H1 (cell line): ENCODE measurements at regions of chr10 and their contacts with region 1.

Region 1: GRCh38 chr10:71696628-71697326 is 22.8 kb downstream of the C10orf105 start:
- DNase-seq: peak; percentile 41 to 95
- H3K4me3 ChIP-seq: no peak overlapping the region
- H3K27ac ChIP-seq: no peak overlapping the region
- H3K4me1 ChIP-seq: no peaks in the 10 kb centered on the region; a peak in 1 of 7 replicates
- H3K27me3 ChIP-seq: no peaks in the 10 kb centered on the region
- CTCF ChIP-seq: peak; percentile 94 to 95 (median 95)
- EP300 ChIP-seq: no peak
- POLR2A ChIP-seq: no peak
- RAD21 ChIP-seq: peak; percentile 81 to 87

Region 2: DNA sequence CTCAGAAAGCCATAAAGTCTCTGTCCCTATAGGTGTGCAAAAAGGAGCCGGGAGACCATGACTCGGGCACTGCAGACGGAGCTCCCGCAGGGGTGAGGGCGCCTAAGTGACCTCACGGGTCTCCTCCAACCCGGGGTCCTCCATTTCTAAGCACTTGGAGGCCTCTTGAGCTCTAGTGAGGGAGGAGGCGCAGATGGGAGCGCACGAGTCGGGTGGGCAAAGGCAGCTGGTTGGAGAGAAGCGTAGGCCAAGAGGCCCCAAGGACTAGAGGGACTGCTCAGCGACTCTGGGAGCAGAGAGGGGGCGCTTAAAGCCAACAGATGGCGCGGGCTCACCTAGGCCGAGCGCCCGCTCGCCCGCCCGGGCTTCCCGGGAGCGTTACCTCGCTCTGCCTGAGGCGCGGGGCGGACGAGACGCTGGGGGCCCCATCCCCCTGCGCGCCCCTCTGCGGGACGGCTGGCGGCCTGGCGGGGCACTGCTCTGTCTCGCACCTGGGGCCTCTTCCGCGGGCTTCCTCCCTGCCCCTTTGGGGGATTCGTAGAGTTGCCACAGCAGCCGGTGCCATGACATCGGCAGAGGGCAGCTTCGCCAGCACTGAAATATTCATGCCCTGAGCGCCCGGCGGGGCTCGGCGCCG is 300.6 kb before region 1 on chr10:
- CTCF ChIA-PET with region 1: interaction called, 12 read pairs
- POLR2A ChIA-PET with region 1: no interaction called
- DNase-seq: peak; percentile 60 to 79
- H3K4me3 ChIP-seq: peak overlapping the region; percentile 54 to 86 (median 62)
- H3K27ac ChIP-seq: no peak overlapping the region
- H3K4me1 ChIP-seq: peaks cover 0 to 18% (median 10%) of the 10 kb centered on the region in 4 experiments; a peak in 6 of 7 replicates
- H3K27me3 ChIP-seq: peaks cover 15 to 50% (median 40%) of the 10 kb centered on the region in 4 experiments
- CTCF ChIP-seq: peak; percentile 55 to 84 (median 71)
- EP300 ChIP-seq: no peak
- POLR2A ChIP-seq: no peak
- RAD21 ChIP-seq: peak; percentile 84 to 88

Region 3: GRCh38 chr10:71638064-71638821 is 58.5 kb before region 1 on chr10:
- CTCF ChIA-PET with region 1: interaction called, 47 read pairs
- POLR2A ChIA-PET with region 1: no interaction called
- DNase-seq: no peak
- H3K4me3 ChIP-seq: no peak overlapping the region
- H3K27ac ChIP-seq: no peak overlapping the region
- H3K4me1 ChIP-seq: peaks cover 5 to 44% (median 34%) of the 10 kb centered on the region in 4 experiments
- H3K27me3 ChIP-seq: peaks cover 0 to 20% (median 12%) of the 10 kb centered on the region in 4 experiments; a peak in 5 of 7 replicates
- CTCF ChIP-seq: no peak
- EP300 ChIP-seq: no peak
- POLR2A ChIP-seq: no peak
- RAD21 ChIP-seq: no peak

Region 4: DNA sequence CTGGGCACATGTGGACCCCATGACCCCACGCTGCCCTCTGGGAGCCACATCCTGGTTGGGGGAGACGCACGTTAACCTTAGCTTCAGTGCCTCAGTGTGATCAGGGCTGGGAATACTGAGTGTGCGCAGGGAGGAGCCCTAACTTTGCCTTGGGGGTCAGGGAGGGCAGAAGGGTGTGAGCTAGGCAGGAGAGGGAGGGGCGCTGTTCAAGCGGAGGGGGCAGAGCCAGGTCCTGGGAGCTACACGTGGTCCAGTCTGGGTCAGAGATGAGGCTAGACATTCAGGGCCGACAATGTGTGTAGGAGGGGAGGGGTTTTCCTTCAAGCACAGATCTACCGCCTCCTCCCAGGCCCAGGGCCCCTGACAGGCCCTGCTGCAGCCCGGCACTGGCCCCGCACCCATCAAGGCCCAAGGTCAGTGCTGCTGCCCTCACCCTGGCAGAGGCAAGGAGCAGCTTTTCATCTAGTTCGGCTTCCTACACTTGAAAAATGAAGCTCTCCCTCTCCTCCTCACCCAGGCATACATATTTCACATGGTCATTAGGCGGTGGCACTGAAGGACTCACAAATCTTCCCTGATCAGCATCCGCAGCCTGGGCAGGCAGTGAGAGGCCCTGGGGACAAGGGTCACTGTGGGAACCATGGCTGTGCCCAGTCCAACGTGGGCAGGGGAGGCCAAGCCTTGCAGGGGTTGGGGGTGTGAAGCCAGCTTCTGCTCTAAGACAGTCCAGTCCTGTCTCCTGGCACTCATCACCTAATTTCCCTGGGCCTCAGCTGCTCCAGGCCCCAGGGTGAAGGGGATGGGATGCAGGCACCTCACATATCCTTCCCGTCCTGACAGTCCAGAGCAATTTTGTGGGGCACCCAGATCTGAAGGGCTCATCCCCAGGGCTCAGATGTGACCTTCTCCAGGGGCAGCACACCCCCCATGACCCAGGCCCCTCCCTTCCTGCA is 24.5 kb before region 1 on chr10:
- CTCF ChIA-PET with region 1: interaction called, 52 read pairs
- POLR2A ChIA-PET with region 1: interaction called, 3 read pairs
- DNase-seq: no peak
- H3K4me3 ChIP-seq: no peak overlapping the region
- H3K27ac ChIP-seq: no peak overlapping the region
- H3K4me1 ChIP-seq: no peaks in the 10 kb centered on the region; a peak in 1 of 7 replicates
- H3K27me3 ChIP-seq: no peaks in the 10 kb centered on the region
- CTCF ChIP-seq: no peak
- EP300 ChIP-seq: no peak
- POLR2A ChIP-seq: no peak
- RAD21 ChIP-seq: no peak

Region 5: DNA sequence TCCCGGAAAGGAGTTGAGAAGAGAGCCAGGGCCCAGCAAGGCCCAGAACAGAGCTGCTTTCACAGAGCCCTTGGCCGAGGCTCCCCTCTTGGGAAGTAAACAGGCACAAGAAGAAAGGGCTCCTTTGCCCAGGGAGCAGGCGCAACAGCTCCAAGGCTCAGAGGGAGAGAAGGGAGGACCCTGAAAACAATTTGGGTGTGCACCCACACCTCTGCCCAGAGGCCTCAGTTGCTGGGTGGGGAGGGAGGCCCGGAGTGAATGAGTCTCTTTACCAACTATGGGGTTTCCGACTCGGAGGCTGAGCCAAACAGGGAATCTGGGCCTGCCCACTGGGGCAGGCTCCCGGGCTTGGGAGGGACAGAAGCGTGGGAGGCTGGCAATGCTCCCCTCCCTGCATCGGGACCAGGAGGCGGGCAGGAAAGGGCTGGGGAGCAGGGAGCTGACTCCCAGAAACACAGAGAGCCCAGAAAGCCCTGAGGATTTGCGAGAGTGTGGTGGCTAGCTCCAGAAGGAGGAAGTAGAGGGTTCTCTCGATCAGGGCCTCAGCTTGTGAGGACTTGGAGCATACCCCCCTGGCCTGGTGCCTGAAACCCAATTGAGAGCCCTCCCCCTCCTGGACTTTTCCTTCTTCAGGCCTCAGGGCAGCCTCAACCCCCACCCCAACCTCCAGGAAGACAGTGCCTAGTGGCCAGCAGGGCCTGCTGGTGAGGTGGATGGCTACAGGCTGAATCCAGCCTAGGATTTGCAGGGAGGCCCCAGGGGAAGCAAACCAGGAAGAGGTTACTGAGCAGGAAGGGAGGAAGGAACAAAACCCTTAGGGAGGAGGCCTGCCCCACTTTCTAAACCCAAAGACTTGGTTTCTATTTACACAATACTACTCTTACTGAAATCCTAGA is 16.6 kb after region 1 on chr10:
- CTCF ChIA-PET with region 1: interaction called, 169 read pairs
- POLR2A ChIA-PET with region 1: interaction called, 3 read pairs
- DNase-seq: no peak
- H3K4me3 ChIP-seq: no peak overlapping the region
- H3K27ac ChIP-seq: no peak overlapping the region
- H3K4me1 ChIP-seq: peaks cover 0 to 6% (median 0%) of the 10 kb centered on the region in 4 experiments; a peak in 1 of 7 replicates
- H3K27me3 ChIP-seq: peaks cover 0 to 3% (median 0%) of the 10 kb centered on the region in 4 experiments; a peak in 1 of 7 replicates
- CTCF ChIP-seq: peak in 2 of 3 experiments; percentile 10 to 15; a peak in 2 of 4 replicates
- EP300 ChIP-seq: no peak
- POLR2A ChIP-seq: no peak
- RAD21 ChIP-seq: no peak; a peak in 1 of 4 replicates

Region 6: DNA sequence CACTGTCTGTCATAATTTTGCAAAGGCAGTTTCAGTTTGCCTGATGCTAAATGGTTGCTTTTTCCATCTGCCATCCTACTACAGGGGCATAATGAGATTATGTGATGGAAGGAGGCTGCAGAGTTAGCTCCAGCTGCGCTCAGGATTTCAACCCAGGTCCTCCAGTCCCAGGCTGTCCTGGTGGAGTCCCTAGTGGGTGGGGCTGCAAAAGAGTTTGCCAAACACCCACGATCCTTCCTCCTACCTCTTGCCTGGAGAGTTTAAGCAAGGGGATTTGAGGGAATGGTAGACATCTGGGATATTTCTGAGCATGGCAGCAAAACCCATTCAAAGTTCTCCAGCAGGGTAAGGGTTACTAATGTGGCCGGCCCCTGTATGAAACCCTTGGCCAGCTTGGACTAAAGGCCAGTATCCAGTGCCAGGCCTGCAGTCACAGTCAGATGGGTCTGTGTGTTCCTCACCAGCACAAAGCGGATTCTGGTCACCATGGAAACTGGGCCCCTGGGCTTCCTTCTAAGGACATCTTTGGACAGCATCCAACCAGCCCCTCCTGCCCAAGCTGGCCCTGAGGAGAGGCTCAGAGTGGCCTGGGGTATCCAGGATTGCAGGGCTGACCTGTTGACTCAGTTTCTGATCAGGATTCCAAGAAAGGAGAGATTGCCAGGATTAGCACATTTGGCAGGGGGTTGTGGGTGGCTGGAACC is 224.7 kb after region 1 on chr10:
- CTCF ChIA-PET with region 1: no interaction called
- POLR2A ChIA-PET with region 1: no interaction called
- DNase-seq: no peak
- H3K4me3 ChIP-seq: no peak overlapping the region
- H3K27ac ChIP-seq: no peak overlapping the region
- H3K4me1 ChIP-seq: no peaks in the 10 kb centered on the region
- H3K27me3 ChIP-seq: no peaks in the 10 kb centered on the region
- CTCF ChIP-seq: no peak
- EP300 ChIP-seq: no peak
- POLR2A ChIP-seq: no peak
- RAD21 ChIP-seq: no peak

Region 7: GRCh38 chr10:71939861-71940474 is 243.2 kb after region 1 on chr10:
- CTCF ChIA-PET with region 1: no interaction called
- POLR2A ChIA-PET with region 1: no interaction called
- DNase-seq: no peak
- H3K4me3 ChIP-seq: no peak overlapping the region
- H3K27ac ChIP-seq: no peak overlapping the region
- H3K4me1 ChIP-seq: no peaks in the 10 kb centered on the region
- H3K27me3 ChIP-seq: no peaks in the 10 kb centered on the region
- CTCF ChIP-seq: no peak
- EP300 ChIP-seq: no peak
- POLR2A ChIP-seq: no peak
- RAD21 ChIP-seq: no peak